Heart right ventricle (tissue), 16 donors: ENCODE measurements at regions of chr2 and their contacts with region 1.

Region 1: GRCh38 chr2:97806738-97807618 is 93.6 kb downstream of the ZAP70 start:
- DNase-seq: peak; percentile 82 to 87
- ATAC-seq: peak; percentile 91 to 99 (median 97)
- H3K4me3 ChIP-seq: no peak overlapping the region
- H3K27ac ChIP-seq: peak overlapping the region in 2 of 10 donors; percentile 2 to 31
- H3K4me1 ChIP-seq: peaks cover 0 to 14% (median 4%) of the 10 kb centered on the region in 9 donors
- H3K27me3 ChIP-seq: no peaks in the 10 kb centered on the region
- CTCF ChIP-seq: peak; percentile 66 to 98 (median 95)

Region 2: GRCh38 chr2:97730245-97730644 is 76.7 kb before region 1 on chr2:
- intact Hi-C with region 1: no loop called
- DNase-seq: no peak
- ATAC-seq: no peak
- H3K4me3 ChIP-seq: no peak overlapping the region
- H3K27ac ChIP-seq: no peak overlapping the region
- H3K4me1 ChIP-seq: peaks cover 12 to 39% (median 30%) of the 10 kb centered on the region in 9 donors
- H3K27me3 ChIP-seq: no peaks in the 10 kb centered on the region
- CTCF ChIP-seq: no peak

Region 3: DNA sequence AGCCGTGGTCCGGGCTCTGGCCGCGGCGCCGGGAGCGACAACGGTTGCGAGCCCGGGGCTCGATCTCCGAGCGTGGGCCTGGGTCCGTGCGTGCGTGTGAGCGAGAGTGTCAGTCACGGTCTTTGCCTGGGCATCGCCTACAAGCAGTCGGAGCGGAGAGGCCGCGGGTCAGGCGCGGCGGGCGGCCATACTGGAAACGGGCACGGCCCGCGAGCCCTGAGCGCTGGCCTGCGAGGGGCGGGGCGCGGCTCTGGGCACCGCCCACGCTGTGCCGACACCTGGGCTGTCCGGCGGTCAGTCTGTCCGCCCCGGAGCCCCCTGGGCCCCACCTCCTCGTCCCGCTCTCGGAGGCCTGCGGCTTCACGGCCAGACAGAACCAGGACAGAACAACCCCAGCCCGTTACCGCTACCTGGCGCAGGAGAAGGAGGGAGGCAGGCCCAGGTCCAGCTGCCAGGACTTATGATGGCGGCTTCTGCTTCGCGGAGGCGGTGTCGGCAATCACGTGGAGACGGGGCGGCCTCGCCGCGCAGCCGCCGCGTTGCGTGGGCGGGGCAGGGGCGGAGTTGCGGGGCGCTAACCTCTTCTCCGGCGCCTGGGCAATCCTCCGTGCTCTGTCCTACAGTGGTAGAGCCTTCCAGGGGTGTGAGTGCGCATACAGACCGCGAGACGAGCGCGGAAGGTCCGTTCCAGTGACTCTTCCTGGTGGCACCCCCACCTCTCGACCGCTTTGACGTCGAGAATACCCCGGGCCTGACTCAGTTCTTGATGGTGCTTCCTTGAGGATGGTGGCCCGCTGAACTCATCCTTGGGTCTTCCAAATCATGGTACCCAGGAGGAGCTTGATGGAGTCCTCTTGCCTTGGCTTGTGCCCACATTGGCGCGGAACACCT is 189.0 kb after region 1 on chr2 and contains the start of gene TMEM131:
- intact Hi-C with region 1: loop called in 8 of 10 experiments (anchors 2 to 10 kb)
- DNase-seq: peak; percentile 95 to 96
- ATAC-seq: peak; percentile 97 to 99 (median 97)
- H3K4me3 ChIP-seq: peak within 1 kb of the TSS; percentile 61 to 91 (median 86)
- H3K27ac ChIP-seq: peak within 1 kb of the TSS; percentile 94 to 99 (median 96)
- H3K4me1 ChIP-seq: peaks cover 0 to 45% (median 31%) of the 10 kb centered on the region in 9 donors
- H3K27me3 ChIP-seq: no peaks in the 10 kb centered on the region
- CTCF ChIP-seq: no peak
- total RNA-seq, gene TMEM131: 26.3 to 34.3 (median 30.7) TPM

Region 4: DNA sequence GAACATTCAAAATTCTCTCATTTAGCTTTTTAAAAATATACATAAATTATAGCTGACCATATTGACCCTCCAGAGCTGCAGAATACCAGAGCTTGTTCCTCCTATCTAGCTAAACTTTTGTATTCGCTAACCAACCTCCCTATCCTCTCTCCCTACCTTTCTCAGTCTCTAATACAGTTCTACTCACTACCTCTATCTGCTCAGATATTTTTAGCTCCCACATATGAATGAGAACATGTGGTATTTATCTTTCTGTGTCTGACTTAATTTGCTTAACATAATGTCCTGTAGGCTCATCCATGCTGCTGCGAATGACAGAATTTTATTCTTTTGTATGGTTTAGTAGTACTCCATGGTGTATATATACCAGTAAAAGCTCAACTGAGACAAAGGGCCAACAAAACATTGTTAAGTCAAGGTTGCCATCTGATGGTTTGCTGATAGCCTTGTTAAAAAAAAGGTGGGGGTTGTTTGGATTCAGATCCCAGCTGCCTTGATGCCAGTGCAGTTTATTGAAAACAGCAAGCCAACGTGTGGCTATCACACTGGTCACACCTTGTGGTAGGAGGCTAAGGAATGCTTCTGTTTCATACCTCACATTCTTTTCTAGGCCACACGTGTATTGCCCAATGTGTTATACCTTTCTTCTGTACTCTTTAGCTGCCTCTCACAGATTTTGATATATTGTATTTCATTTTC is 381.5 kb after region 1 on chr2:
- intact Hi-C with region 1: loop called in 3 of 10 experiments (anchors 5 to 10 kb)
- DNase-seq: no peak
- ATAC-seq: peak in 2 of 8 donors; percentile 56 to 59
- H3K4me3 ChIP-seq: no peak overlapping the region
- H3K27ac ChIP-seq: no peak overlapping the region
- H3K4me1 ChIP-seq: peaks cover 0 to 15% (median 0%) of the 10 kb centered on the region in 9 donors
- H3K27me3 ChIP-seq: no peaks in the 10 kb centered on the region
- CTCF ChIP-seq: peak in 2 of 9 donors; percentile 16 to 31

Region 5: GRCh38 chr2:98269274-98269673 is 462.3 kb after region 1 on chr2:
- intact Hi-C with region 1: loop called in 7 of 10 experiments (anchors 1 to 10 kb)
- DNase-seq: peak in 1 of 2 donors; percentile 17
- ATAC-seq: no peak
- H3K4me3 ChIP-seq: no peak overlapping the region
- H3K27ac ChIP-seq: no peak overlapping the region
- H3K4me1 ChIP-seq: no peaks in the 10 kb centered on the region
- H3K27me3 ChIP-seq: peaks cover 0 to 3% (median 0%) of the 10 kb centered on the region in 7 donors
- CTCF ChIP-seq: peak; percentile 30 to 71 (median 66)